Activated B cell treated with CpG ODN at 0.5 μM for 24 hours (primary cell): ENCODE measurements at regions of chr16 and their contacts with region 1.

Region 1: GRCh38 chr16:23924128-23924527 is 88.3 kb downstream of the PRKCB start:
- DNase-seq: no peak
- ATAC-seq: peak; percentile 91
- H3K4me3 Mint-ChIP-seq: peak overlapping the region; percentile 42
- H3K27ac Mint-ChIP-seq: peak overlapping the region; percentile 94
- H3K4me1 Mint-ChIP-seq: peaks cover 82% of the 10 kb centered on the region
- H3K27me3 Mint-ChIP-seq: no peaks in the 10 kb centered on the region
- CTCF ChIP-seq: no peak

Region 2: DNA sequence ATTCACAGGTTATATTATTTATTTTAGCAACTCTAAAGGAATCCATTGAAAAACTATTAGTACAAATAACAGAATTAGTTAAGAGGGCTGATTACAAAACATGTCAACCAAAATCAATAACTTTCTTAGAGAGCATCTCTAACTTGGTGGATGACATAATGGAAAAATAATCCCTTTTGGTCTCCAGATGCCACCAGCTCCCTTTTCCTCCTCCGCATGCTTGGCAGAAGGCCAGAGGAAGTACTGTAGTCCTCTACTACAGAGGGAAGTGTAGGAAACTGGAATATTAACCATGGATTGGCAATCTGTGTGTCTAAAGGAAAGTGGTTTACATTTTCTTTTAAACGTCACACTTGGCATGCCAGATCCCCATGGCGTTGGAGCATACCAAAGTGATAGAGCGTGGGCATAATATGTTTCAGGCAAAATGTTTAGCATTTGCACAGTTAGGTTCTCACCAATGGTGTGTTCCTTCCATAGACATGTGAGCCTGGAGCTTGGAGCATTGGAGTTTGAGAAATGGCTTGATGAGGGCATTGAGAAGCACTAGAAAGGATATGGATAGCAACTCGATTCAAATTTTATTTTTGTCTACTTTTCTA is 17.9 kb after region 1 on chr16:
- CTCF ChIA-PET with region 1: no interaction called
- POLR2A ChIA-PET with region 1: no interaction called
- intact Hi-C with region 1: loop called (anchors 2 kb)
- DNase-seq: no peak
- ATAC-seq: no peak
- H3K4me3 Mint-ChIP-seq: no peak overlapping the region
- H3K27ac Mint-ChIP-seq: peak overlapping the region; percentile 80
- H3K4me1 Mint-ChIP-seq: peaks cover 84% of the 10 kb centered on the region
- H3K27me3 Mint-ChIP-seq: no peaks in the 10 kb centered on the region
- CTCF ChIP-seq: no peak